Pancreas (tissue), 10 donors: ENCODE measurements at regions of chr6 and their contacts with region 1.

Region 1: DNA sequence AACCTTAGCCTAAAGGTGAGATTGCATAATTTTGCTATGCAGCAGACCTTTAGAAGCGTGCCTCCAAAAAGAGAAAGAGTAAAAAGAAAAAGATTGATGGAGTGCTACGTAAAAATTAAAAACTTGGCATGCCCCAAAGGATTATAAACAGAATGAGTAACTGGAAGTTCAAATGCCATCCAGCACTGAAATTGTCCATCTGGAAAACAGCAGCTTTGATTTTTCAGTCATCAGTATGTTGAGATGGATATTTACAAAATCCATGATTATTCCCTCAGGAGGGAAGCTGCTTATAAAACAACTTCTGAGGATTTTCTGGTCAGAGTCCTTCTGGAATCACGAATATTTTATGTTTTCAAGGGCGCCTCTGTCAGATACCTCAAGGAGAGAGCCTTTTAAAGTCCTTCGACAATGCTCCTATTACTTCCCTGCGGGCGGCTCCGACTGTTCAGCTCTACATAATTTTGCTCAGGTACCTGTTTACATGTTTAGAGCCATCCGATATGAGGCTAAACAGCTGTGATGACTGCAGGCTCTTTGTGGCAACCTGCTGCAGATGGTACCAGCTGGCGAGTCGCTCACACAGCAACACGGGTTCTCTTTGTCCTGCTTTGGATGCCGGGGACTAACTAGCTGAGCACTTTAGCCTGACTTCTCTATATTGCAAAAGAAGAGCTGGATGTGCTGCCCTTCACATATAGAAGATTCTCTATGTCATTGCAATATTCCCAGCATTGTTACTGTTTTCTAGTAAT is 83.3 kb downstream of the RCAN2 start:
- DNase-seq: no peak
- ATAC-seq: no peak
- H3K4me3 ChIP-seq: no peak overlapping the region
- H3K27ac ChIP-seq: no peak overlapping the region
- H3K4me1 ChIP-seq: peaks cover 0 to 7% (median 0%) of the 10 kb centered on the region in 3 donors
- H3K27me3 ChIP-seq: no peaks in the 10 kb centered on the region
- CTCF ChIP-seq: no peak

Region 2: GRCh38 chr6:45916692-45917091 is 491.3 kb before region 1 on chr6:
- intact Hi-C with region 1: no loop called
- DNase-seq: no peak
- ATAC-seq: no peak
- H3K4me3 ChIP-seq: no peak overlapping the region
- H3K27ac ChIP-seq: no peak overlapping the region
- H3K4me1 ChIP-seq: no peaks in the 10 kb centered on the region
- H3K27me3 ChIP-seq: no peaks in the 10 kb centered on the region
- CTCF ChIP-seq: no peak

Region 3: GRCh38 chr6:46090115-46091079 is 317.6 kb before region 1 on chr6:
- intact Hi-C with region 1: loop called in 1 of 3 experiments (anchors 10 kb)
- DNase-seq: peak; percentile 32 to 63 (median 52)
- ATAC-seq: peak; percentile 83 to 98 (median 92)
- H3K4me3 ChIP-seq: no peak overlapping the region
- H3K27ac ChIP-seq: no peak overlapping the region
- H3K4me1 ChIP-seq: peaks cover 0 to 5% (median 0%) of the 10 kb centered on the region in 3 donors
- H3K27me3 ChIP-seq: no peaks in the 10 kb centered on the region
- CTCF ChIP-seq: peak; percentile 55 to 84 (median 66)

Region 4: DNA sequence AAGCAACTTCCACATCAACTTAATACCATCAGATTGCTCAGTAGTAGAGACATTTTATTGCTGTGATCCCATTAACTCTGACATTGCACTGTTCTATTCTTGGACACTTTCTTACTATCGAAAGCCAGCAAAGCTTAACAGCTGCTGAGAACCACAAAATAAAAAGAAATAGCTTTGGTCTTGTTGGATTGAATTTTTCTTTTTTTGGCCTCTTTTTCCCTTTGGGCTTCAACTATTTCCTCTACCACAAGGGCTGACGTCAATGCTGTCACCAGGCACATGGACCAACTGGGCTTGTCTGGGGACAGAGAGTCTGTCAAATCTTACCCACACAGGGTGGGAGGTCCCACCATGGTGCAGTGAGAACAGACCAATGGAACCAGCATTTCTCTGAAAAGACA is 173.8 kb before region 1 on chr6:
- intact Hi-C with region 1: loop called in 1 of 3 experiments (anchors 10 kb)
- DNase-seq: no peak
- ATAC-seq: peak in 1 of 4 donors; percentile 26
- H3K4me3 ChIP-seq: no peak overlapping the region
- H3K27ac ChIP-seq: no peak overlapping the region
- H3K4me1 ChIP-seq: no peaks in the 10 kb centered on the region
- H3K27me3 ChIP-seq: no peaks in the 10 kb centered on the region
- CTCF ChIP-seq: no peak

Region 5: DNA sequence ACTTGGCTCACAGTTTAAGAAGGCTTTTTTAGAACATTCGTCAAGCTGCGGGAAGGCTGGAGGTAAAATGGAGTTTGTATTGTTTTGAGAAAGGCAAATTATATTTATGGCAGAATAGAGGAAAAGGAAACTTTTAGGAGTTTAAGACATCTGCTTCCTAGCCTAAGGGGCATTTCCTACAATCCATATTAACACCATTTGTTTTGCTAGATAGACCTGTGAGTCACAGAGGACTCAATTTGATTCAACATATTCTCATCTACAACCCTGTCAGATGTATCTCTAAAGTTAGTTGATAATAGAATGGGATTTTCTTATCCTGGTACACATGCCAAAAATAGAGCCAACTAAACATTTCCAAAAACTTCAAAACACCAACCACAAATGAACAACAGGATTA is 48.3 kb after region 1 on chr6:
- intact Hi-C with region 1: no loop called
- DNase-seq: no peak
- ATAC-seq: no peak
- H3K4me3 ChIP-seq: no peak overlapping the region
- H3K27ac ChIP-seq: no peak overlapping the region
- H3K4me1 ChIP-seq: no peaks in the 10 kb centered on the region
- H3K27me3 ChIP-seq: no peaks in the 10 kb centered on the region
- CTCF ChIP-seq: no peak